MCF 10A (cell line): ENCODE measurements at regions of chr9 and their contacts with region 1.

Region 1: GRCh38 chr9:121201738-121202533 is at the start of gene RAB14:
- DNase-seq: peak; percentile 98
- H3K4me3 Mint-ChIP-seq: peak within 1 kb of the TSS; percentile 83
- H3K27ac Mint-ChIP-seq: peak within 1 kb of the TSS; percentile 81
- H3K4me1 Mint-ChIP-seq: peaks cover 26% of the 10 kb centered on the region
- H3K27me3 Mint-ChIP-seq: no peaks in the 10 kb centered on the region
- CTCF ChIP-seq: peak; percentile 47
- total RNA-seq, gene RAB14: 65.8 and 77.0 TPM in 2 replicates

Region 2: GRCh38 chr9:120985810-120986222 is 216.1 kb before region 1 on chr9:
- CTCF ChIA-PET with region 1: no interaction called
- POLR2A ChIA-PET with region 1: interaction called, 3 read pairs
- intact Hi-C with region 1: loop called (anchors 1 kb)
- DNase-seq: peak; percentile 61
- H3K4me3 Mint-ChIP-seq: no peak overlapping the region
- H3K27ac Mint-ChIP-seq: no peak overlapping the region
- H3K4me1 Mint-ChIP-seq: no peaks in the 10 kb centered on the region
- H3K27me3 Mint-ChIP-seq: no peaks in the 10 kb centered on the region
- CTCF ChIP-seq: peak; percentile 58

Region 3: DNA sequence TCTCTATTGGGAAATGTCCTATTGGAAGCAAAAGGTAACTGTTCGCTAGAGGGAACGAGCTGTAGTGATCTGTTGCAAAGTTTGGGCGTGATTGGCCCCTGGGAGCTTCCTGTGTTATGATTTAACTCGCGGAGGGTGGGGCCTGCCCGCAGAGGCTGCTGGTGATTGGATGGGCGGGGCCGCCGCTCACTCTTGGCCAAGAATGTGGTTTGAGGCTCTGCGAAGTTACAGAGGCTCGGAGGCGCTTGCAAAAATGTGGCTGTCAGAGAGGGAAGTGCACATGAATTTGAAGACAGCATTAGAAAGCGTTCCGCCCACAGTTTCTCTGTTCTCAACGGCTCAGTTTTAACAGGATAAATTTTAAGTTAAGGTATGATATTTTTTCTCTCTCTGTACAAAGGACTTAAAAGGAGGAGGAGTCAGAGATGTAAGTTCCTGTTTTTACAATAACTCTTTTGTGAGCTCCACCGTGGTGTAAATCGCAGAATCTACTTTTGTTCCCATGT is 80.3 kb before region 1 on chr9:
- CTCF ChIA-PET with region 1: no interaction called
- POLR2A ChIA-PET with region 1: interaction called, 40 read pairs
- intact Hi-C with region 1: no loop called
- DNase-seq: peak; percentile 98
- H3K4me3 Mint-ChIP-seq: peak overlapping the region; percentile 89
- H3K27ac Mint-ChIP-seq: peak overlapping the region; percentile 80
- H3K4me1 Mint-ChIP-seq: peaks cover 16% of the 10 kb centered on the region
- H3K27me3 Mint-ChIP-seq: no peaks in the 10 kb centered on the region
- CTCF ChIP-seq: no peak

Region 4: GRCh38 chr9:121187636-121188305 is 14.2 kb before region 1 on chr9:
- CTCF ChIA-PET with region 1: interaction called, 3 read pairs
- POLR2A ChIA-PET with region 1: interaction called, 37 read pairs
- intact Hi-C with region 1: no loop called
- DNase-seq: no peak
- H3K4me3 Mint-ChIP-seq: no peak overlapping the region
- H3K27ac Mint-ChIP-seq: no peak overlapping the region
- H3K4me1 Mint-ChIP-seq: peaks cover 8% of the 10 kb centered on the region
- H3K27me3 Mint-ChIP-seq: no peaks in the 10 kb centered on the region
- CTCF ChIP-seq: no peak

Region 5: DNA sequence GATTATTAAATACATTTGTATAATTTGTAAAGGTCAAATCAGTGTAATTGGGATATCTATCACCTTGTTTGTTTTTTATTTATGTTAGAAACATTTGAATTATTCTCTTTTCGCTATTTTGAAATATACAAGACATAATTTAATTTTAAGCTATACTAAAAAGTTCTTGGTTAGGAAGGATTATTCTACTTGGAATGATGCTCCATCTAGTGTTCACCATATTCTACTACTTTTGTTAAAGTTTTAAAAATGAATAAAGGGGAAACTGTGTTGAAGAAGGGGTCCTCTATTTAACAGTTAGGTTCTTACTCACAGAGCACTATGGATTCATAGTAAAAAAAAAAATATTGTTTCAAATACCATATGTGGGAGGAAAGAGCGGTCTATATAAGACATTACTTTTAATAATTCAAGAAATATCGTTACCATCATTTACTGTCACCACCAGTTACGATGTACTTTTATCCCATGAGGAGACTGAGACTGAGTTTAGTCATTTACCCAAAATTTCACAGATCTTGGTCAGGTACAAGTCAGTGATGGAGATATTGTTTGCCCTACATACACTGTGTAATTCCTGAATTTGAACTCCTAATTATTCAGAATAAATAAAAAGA is 174.4 kb after region 1 on chr9:
- CTCF ChIA-PET with region 1: interaction called, 3 read pairs
- POLR2A ChIA-PET with region 1: interaction called, 40 read pairs
- intact Hi-C with region 1: no loop called
- DNase-seq: no peak
- H3K4me3 Mint-ChIP-seq: no peak overlapping the region
- H3K27ac Mint-ChIP-seq: no peak overlapping the region
- H3K4me1 Mint-ChIP-seq: peaks cover 28% of the 10 kb centered on the region
- H3K27me3 Mint-ChIP-seq: no peaks in the 10 kb centered on the region
- CTCF ChIP-seq: peak; percentile 45